GM10248 (cell line): ENCODE measurements at regions of chr1 and their contacts with region 1.

Region 1: GRCh38 chr1:182084487-182085316 is 23.2 kb upstream of the ZNF648 start:
- DNase-seq: peak; percentile 85
- CTCF ChIP-seq: peak; percentile 86

Region 2: DNA sequence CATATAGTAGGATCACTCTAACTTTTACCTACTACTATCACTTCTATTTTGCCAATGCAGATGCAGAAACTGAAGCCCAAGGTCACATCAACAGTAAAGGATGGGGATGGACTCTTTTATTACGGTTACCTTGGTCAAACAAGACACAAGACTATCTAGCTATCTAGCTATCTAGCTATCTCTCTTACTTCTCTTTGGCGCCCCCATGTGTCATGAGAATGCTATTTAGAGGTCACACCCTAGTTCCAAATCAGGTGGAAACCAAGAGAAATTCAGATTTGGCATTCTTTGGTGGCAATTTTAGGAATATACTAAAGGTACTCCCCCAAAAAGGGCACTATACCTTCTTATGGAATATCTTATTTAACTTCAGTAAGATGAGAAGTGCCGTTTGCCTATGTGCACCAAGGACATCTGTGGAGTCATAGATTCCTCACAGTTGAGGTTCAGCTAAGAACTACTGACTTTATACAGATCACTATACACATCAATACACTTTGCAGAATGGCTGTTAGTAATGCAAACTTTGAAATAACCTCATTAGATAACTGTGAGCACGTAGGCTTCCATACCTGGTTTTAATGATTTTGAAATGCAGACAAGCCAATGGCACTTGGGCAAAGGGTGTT is 29.9 kb before region 1 on chr1:
- CTCF ChIA-PET with region 1: interaction called, 19 read pairs
- POLR2A ChIA-PET with region 1: no interaction called
- DNase-seq: peak; percentile 56
- CTCF ChIP-seq: peak; percentile 81

Region 3: DNA sequence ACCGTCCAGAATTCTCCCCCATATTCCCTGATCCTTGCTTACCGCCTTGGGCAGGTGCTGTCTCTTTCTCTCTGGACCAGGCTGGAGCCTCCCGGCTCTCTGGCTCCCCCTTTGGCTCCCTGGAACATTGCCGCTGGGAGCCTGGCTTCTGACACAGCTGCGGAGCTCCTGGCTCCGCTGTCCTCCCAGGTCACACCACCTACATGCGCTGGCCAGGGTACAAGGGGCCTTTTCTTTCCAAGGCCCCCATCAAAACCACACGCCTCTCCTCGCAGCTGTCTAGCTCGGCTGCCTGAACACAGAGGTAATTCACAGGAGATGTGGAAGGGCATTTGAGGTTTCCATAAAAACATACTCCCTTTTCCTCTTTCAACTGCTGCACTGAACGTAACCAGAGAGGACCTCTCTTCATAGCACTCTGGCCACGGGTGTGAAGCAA is 15.7 kb before region 1 on chr1:
- CTCF ChIA-PET with region 1: interaction called, 90 read pairs
- POLR2A ChIA-PET with region 1: no interaction called
- DNase-seq: peak; percentile 67
- CTCF ChIP-seq: peak; percentile 87

Region 4: GRCh38 chr1:182110635-182111034 is 25.9 kb after region 1 on chr1:
- CTCF ChIA-PET with region 1: interaction called, 15 read pairs
- POLR2A ChIA-PET with region 1: no interaction called
- DNase-seq: no peak
- CTCF ChIP-seq: no peak

Region 5: DNA sequence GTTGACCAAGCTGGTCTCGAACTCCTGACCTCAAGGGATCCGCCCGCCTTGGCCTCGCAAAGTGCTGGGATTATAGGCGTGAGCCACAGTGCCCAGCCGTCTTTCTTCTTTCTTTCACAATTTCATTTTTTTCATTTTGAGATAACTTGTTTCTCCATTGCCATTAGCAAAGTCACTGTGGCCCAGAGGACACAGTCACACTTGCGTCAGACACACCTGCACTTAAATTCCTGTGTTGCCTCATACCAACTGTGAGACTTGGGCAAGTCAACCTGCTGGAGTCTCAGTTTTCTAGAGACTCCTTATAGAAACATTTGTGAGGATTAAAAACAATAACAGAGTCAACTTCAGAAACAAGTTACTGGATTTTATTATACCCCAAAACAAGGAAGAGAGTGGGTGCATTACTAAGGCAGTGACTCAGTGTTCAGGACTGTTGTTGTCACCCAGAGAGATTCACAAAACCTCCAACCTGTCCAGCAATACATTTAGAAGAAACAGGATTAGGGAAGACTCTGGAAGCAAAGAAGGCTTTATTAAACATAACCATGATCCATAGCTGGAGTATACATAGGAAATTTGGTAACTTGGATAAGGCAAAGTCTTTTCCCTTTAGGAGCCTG is 313.2 kb after region 1 on chr1:
- CTCF ChIA-PET with region 1: interaction called, 71 read pairs
- POLR2A ChIA-PET with region 1: no interaction called
- DNase-seq: no peak
- CTCF ChIP-seq: no peak